PC-9 (cell line): ENCODE measurements at regions of chr20 and their contacts with region 1.

Region 1: DNA sequence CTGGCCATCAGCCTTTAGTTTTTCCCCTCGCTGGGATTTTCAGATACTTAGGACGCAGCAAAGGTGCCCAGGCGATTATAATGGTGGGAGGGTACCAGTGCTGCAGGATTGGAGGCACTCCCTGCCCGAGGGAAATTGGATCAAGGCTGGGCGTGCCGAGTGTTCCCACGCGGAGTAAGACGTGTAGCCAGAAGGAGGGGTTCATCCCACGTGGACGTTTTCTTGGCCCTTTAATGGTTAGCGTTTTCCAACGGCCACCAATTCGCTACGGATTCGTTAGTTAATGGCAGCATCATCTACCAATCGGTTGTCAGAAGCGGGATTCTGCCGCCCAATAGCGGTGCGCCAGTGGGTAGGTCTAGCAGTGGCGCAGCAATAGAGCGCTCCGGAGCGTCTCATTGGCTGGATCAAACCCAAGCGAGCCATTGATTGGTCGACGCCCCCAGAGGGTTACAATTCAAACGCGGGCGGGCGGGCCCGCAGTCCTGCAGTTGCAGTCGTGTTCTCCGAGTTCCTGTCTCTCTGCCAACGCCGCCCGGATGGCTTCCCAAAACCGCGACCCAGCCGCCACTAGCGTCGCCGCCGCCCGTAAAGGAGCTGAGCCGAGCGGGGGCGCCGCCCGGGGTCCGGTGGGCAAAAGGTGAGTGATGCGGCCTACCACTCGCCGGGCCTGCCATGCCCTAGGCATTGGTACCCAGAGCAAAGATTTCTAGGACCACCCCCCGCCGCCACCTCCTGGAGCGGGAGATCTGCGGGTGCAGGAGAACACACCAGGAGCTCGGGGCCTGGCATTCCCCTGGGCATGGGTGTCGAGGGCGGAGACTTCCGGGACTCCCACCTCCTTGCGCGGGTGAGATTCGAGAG is at the start of gene UBE2C:
- DNase-seq: peak; percentile 98 to 99
- H3K4me3 ChIP-seq: peak within 1 kb of the TSS; percentile 77
- H3K27ac ChIP-seq: no peak within 1 kb of the TSS
- H3K4me1 ChIP-seq: peaks cover 38% of the 10 kb centered on the region
- H3K27me3 ChIP-seq: no peaks in the 10 kb centered on the region
- CTCF ChIP-seq: no peak
- total RNA-seq, gene UBE2C: 207 TPM in 2 replicates

Region 2: DNA sequence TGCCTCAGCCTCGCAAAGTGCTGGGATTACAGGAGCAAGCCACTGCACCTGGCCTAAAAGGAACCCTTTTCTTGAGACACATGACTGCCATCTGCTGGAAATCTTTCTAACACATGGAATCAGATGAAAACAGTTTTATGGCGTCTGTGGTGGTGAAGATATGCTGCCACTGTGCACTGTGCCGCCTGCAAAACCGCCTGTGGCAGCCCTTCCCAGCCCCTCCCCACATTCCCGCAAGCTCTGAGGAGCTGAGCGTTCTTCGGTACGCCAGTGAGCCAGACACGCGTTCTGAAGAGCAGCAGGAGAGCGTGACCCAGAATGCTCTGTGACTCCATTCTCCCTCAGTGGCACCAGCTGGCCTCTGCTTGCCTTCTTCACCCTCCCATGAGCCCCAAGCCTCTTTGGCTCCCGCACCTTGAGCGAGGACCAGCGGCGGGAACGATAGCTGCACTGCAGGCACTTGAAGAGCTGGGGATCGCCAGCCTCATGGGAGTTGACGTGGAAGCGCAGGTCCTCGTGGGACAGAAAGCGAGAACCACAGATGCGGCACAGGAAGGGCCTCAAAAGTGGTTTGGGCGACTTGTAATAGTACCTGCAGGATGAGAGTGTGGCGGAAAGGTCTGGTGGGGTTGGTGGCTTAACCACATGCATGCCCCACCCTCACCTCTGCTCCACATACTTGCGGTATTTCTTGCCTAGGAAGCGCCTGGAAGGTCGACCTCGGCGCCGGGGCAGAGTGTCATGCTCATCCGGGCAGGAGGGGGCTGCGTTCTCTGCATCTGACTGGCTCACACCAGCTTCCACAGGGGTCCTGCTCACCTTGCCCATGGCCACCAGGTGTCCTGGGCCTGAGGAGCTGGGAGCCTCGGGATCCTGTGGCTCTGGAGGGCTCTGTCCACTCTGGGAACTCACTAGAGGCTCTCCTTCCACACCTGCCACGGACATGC is 150.9 kb after region 1 on chr20:
- CTCF ChIA-PET with region 1: interaction called, 3 read pairs
- POLR2A ChIA-PET with region 1: no interaction called
- intact Hi-C with region 1: loop called (anchors 5 kb)
- DNase-seq: peak; percentile 38 to 58
- H3K4me3 ChIP-seq: no peak overlapping the region
- H3K27ac ChIP-seq: no peak overlapping the region
- H3K4me1 ChIP-seq: no peaks in the 10 kb centered on the region
- H3K27me3 ChIP-seq: no peaks in the 10 kb centered on the region
- CTCF ChIP-seq: peak; percentile 67

Region 3: DNA sequence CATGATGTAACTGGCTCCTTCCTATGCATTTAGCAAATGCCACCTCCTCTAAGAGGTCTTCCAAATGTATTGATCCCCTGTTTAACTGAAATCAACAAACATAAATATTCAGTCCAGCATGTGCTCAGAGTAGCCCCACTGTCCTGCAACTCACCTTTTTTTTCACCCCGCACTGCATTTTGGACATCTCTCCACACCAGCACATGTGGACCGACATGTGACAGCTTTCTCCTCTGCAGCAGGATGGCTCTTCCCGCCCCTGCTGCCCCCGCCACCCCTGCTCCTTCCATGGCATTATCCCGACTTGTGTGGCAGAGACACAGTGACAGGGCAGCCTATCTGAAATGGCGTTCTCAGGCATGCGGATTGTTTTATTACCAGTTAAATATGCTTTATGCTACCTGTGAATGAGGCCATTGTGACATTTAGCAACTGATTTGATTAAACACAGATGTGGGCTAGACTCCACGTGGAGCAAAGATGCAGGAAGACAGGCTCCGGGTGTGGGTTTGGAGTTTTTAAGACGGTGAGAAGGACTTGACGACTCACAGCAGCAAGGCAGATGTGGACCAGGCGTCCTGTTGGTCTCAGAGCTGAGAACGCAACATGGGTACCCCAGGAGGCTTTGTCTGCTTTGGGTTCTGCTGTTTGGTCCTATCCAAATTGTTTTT is 1243.4 kb after region 1 on chr20:
- CTCF ChIA-PET with region 1: no interaction called
- POLR2A ChIA-PET with region 1: no interaction called
- intact Hi-C with region 1: no loop called
- DNase-seq: no peak
- H3K4me3 ChIP-seq: no peak overlapping the region
- H3K27ac ChIP-seq: no peak overlapping the region
- H3K4me1 ChIP-seq: 0 out of 2 replicates have a peak, but pooled peaks cover 4% of the 10 kb centered on the region
- H3K27me3 ChIP-seq: peaks cover 36% of the 10 kb centered on the region
- CTCF ChIP-seq: no peak